Activated T-helper 2 cell treated with anti-CD3 and anti-CD28 coated beads, Interferon-gamma antibody, Interleukin-2, Interleukin-4, amounts not matched to agents 10 μg/mL and 5 μg/mL and 100 μg/mL, durations not matched to agents 14 hours and 24 hours and 36 hours (primary cell): ENCODE measurements at regions of chr5 and their contacts with region 1.

Region 1: GRCh38 chr5:1523771-1524480 is at the start of gene LPCAT1:
- DNase-seq: peak; percentile 77
- H3K4me3 Mint-ChIP-seq: peak within 1 kb of the TSS; percentile 85
- H3K27ac Mint-ChIP-seq: peak within 1 kb of the TSS; percentile 50
- H3K4me1 Mint-ChIP-seq: peaks cover 16% of the 10 kb centered on the region
- H3K27me3 Mint-ChIP-seq: peaks cover 4% of the 10 kb centered on the region
- total RNA-seq, gene LPCAT1: 78.4 and 79.0 TPM in 2 replicates

Region 2: DNA sequence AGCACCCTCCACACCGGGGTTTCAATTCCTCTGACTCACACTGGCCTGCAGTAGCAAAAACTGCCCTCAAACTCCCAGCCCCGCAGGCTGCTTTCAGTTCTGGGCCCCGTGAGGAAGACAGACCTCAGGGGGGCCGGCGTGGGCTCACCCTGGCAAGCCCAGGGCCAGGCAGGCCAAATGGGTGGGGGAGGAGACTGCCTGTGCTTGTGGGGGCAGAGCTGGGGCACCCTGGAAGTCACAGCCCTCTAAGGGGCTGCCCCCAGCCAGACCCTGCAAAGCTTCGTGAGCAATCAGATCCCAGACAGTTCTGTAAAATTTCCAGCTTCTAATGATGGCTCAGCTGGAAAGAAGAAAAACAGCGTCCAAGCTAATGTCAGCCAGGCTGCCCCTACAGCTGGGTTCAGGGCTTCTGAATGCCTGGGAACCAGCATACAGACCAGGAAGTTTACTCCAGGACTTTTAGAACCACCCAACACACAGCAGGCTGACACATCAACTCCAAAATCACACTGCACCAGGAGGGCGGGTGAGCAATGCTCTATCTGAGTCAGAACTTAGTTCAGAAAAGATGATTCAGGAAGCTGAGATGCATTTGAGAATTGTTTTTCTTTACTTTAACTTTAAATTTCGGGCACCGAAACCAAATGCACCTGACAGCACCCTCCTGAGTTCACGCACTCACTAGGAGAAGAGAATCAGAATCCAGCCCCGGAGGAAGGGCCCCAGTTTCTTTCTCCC is 34.8 kb before region 1 on chr5:
- intact Hi-C with region 1: loop called (anchors 5 kb)
- DNase-seq: no peak
- H3K4me3 Mint-ChIP-seq: no peak overlapping the region
- H3K27ac Mint-ChIP-seq: peak overlapping the region; percentile 46
- H3K4me1 Mint-ChIP-seq: peaks cover 11% of the 10 kb centered on the region
- H3K27me3 Mint-ChIP-seq: no peaks in the 10 kb centered on the region

Region 3: GRCh38 chr5:1536322-1536845 is 12.5 kb after region 1 on chr5:
- intact Hi-C with region 1: loop called (anchors 1 kb)
- DNase-seq: peak; percentile 51
- H3K4me3 Mint-ChIP-seq: peak overlapping the region; percentile 69
- H3K27ac Mint-ChIP-seq: peak overlapping the region; percentile 65
- H3K4me1 Mint-ChIP-seq: peaks cover 22% of the 10 kb centered on the region
- H3K27me3 Mint-ChIP-seq: peaks cover 26% of the 10 kb centered on the region

Region 4: DNA sequence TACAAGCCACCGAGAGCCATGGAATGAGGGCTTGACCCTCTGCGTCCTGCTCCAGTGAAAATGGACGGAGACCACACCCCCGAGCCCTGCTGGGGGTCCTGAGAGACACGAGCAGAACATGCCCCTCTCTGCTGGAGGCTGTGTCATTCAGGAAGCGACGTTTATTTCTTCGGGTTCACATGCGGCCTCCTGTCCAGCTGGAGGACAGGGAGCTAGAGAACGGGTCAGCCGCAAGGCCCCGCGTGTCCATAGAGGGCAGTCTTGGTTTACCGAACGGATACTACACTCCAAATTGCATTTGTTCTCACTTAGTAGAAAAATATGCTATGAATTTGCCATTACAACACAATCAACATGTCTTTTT is 239.6 kb after region 1 on chr5:
- intact Hi-C with region 1: no loop called
- DNase-seq: no peak
- H3K4me3 Mint-ChIP-seq: no peak overlapping the region
- H3K27ac Mint-ChIP-seq: no peak overlapping the region
- H3K4me1 Mint-ChIP-seq: no peaks in the 10 kb centered on the region
- H3K27me3 Mint-ChIP-seq: peaks cover 4% of the 10 kb centered on the region